Activated CD4-positive, alpha-beta T cell treated with anti-CD3 and anti-CD28 coated beads for 36 hours (primary cell): ENCODE measurements at regions of chr16 and their contacts with region 1.

Region 1: GRCh38 chr16:79047229-79047983 is 553.1 kb downstream of the MAF start:
- DNase-seq: peak; percentile 28
- ATAC-seq: peak; percentile 36
- H3K4me3 Mint-ChIP-seq: no peak overlapping the region
- H3K27ac Mint-ChIP-seq: no peak overlapping the region
- H3K4me1 Mint-ChIP-seq: peaks cover 33% of the 10 kb centered on the region
- H3K27me3 Mint-ChIP-seq: no peaks in the 10 kb centered on the region

Region 2: GRCh38 chr16:79061181-79061580 is 13.8 kb after region 1 on chr16:
- CTCF ChIA-PET with region 1: interaction called, 11 read pairs
- POLR2A ChIA-PET with region 1: no interaction called
- intact Hi-C with region 1: no loop called
- DNase-seq: no peak
- ATAC-seq: no peak
- H3K4me3 Mint-ChIP-seq: no peak overlapping the region
- H3K27ac Mint-ChIP-seq: no peak overlapping the region
- H3K4me1 Mint-ChIP-seq: peaks cover 10% of the 10 kb centered on the region
- H3K27me3 Mint-ChIP-seq: no peaks in the 10 kb centered on the region